AG04449 (cell line): ENCODE measurements at regions of chr3 and their contacts with region 1.

Region 1: GRCh38 chr3:10223676-10224639 is 24.3 kb upstream of the TATDN2 start:
- DNase-seq: no peak
- H3K4me3 ChIP-seq: no peak overlapping the region
- CTCF ChIP-seq: no peak

Region 2: GRCh38 chr3:10242182-10243065 is 18.5 kb after region 1 on chr3:
- CTCF ChIA-PET with region 1: interaction called, 11 read pairs
- POLR2A ChIA-PET with region 1: no interaction called
- DNase-seq: peak; percentile 49
- H3K4me3 ChIP-seq: no peak overlapping the region
- CTCF ChIP-seq: no peak